ENCODE measurements at regions of chr22 and their contacts with region 1.

Region 1: GRCh38 chr22:36445158-36445668 is 36.2 kb downstream of the TXN2 start:
- DNase-seq: no peak
- H3K4me3 ChIP-seq: peak overlapping the region in 1 of 3 experiments; percentile 31
- H3K4me3 Mint-ChIP-seq: peak overlapping the region in 1 of 2 donors; percentile 58
- H3K27ac ChIP-seq: peak overlapping the region; percentile 18 to 56
- H3K27ac Mint-ChIP-seq: peak overlapping the region; percentile 58 to 89 (median 82)
- H3K4me1 ChIP-seq: peaks cover 71 to 86% of the 10 kb centered on the region in 2 donors
- H3K4me1 Mint-ChIP-seq: peaks cover 75% of the 10 kb centered on the region
- H3K27me3 ChIP-seq: no peaks in the 10 kb centered on the region
- H3K27me3 Mint-ChIP-seq: no peaks in the 10 kb centered on the region
- CTCF ChIP-seq: no peak

Region 2: GRCh38 chr22:36398621-36399469 is 46.4 kb before region 1 on chr22:
- intact Hi-C with region 1: loop called in 1 of 2 experiments (anchors 5 kb)
- DNase-seq: no peak
- H3K4me3 ChIP-seq: peak overlapping the region in 1 of 3 experiments; percentile 57
- H3K4me3 Mint-ChIP-seq: peak overlapping the region in 1 of 2 donors; percentile 51
- H3K27ac ChIP-seq: peak overlapping the region; percentile 2 to 64
- H3K27ac Mint-ChIP-seq: peak overlapping the region; percentile 48 to 87 (median 73)
- H3K4me1 ChIP-seq: peaks cover 90 to 100% of the 10 kb centered on the region in 2 donors
- H3K4me1 Mint-ChIP-seq: peaks cover 85% of the 10 kb centered on the region
- H3K27me3 ChIP-seq: no peaks in the 10 kb centered on the region
- H3K27me3 Mint-ChIP-seq: peaks cover 0 to 3% (median 0%) of the 10 kb centered on the region in 3 donors
- CTCF ChIP-seq: no peak

Region 3: DNA sequence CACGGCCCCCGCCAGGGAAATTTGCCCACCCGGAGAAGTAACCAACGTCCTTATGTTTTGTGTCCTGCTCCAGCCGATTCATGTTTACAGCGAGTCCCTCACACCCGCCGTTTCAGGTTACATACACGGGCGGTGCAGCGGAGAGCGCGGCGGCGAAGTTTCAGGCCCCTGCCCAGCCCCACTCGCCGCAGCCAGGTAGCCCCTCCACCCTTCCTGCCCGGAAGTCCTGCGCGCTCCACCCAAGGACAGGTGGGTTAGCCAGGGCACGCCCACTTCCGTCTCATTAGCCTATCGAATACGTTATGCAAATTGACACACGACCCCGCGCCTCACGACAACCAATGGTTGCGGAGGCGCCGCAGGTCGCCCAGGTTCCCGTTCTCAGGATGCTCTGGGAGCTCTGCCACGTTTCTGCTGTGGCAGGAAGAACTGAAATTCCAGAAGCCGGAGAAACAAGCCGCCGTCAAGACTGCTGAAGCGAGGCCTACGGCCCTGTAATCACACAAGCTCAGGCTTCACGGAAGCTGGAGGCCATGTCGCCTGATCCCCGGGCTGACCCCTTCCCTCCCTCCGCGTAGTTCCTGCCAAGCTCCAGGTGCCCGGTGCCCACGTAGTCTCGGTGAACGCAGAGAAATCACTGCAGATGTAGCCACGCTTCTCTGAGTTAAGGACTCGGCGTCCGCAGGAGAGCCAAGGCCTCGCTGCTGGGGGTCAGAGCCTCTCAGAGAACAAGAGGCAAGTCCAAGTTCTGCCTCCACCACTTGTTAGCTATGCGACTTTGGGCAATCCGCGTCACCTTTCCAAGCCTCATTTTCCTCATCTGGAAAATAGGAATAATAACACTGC is 35.1 kb before region 1 on chr22:
- intact Hi-C with region 1: loop called in 1 of 2 experiments (anchors 5 kb)
- DNase-seq: peak in 2 of 3 donors; percentile 50 to 64
- H3K4me3 ChIP-seq: peak overlapping the region; percentile 7 to 73 (median 32)
- H3K4me3 Mint-ChIP-seq: peak overlapping the region; percentile 80 to 92
- H3K27ac ChIP-seq: peak overlapping the region in 1 of 2 donors; percentile 46
- H3K27ac Mint-ChIP-seq: peak overlapping the region in 6 of 7 donors; percentile 35 to 80 (median 56)
- H3K4me1 ChIP-seq: peaks cover 48 to 49% of the 10 kb centered on the region in 2 donors
- H3K4me1 Mint-ChIP-seq: peaks cover 53% of the 10 kb centered on the region
- H3K27me3 ChIP-seq: no peaks in the 10 kb centered on the region
- H3K27me3 Mint-ChIP-seq: peaks cover 0 to 3% (median 2%) of the 10 kb centered on the region in 3 donors
- CTCF ChIP-seq: no peak

Measured in CD14-positive monocyte (primary cell).